CD14-positive monocyte (primary cell): ENCODE measurements at regions of chr2 and their contacts with region 1.

Region 1: DNA sequence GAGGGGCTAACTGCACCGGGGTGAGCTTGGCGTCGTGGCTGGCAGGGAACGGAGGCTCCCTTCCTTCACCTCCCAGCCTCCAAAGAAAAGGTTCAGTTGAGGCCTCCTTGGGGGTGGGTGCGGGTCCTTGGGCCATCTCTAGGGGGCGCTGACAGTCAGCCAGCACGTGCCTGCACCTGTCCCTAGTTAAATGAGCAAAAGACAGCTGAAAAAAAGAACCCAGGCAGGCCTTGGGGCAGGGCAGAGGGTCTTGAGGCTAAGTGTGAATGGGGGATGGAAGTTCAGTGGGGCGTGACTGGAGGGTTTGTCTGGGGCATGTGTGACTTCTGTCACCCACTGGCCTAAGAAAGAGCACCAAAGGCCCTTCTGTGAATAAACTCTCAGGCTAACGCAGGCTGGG is 56.4 kb downstream of the ZFP36L2 start:
- DNase-seq: peak in 1 of 3 donors; percentile 38
- H3K4me3 ChIP-seq: peak overlapping the region in 1 of 3 experiments; percentile 72
- H3K4me3 Mint-ChIP-seq: peak overlapping the region; percentile 80 to 95
- H3K27ac ChIP-seq: peak overlapping the region; percentile 91 to 92
- H3K27ac Mint-ChIP-seq: peak overlapping the region; percentile 98 to 100 (median 99)
- H3K4me1 ChIP-seq: peaks cover 84 to 92% of the 10 kb centered on the region in 2 donors
- H3K4me1 Mint-ChIP-seq: peaks cover 86% of the 10 kb centered on the region
- H3K27me3 ChIP-seq: no peaks in the 10 kb centered on the region
- H3K27me3 Mint-ChIP-seq: peaks cover 0 to 4% (median 2%) of the 10 kb centered on the region in 3 donors
- CTCF ChIP-seq: peak; percentile 76

Region 2: DNA sequence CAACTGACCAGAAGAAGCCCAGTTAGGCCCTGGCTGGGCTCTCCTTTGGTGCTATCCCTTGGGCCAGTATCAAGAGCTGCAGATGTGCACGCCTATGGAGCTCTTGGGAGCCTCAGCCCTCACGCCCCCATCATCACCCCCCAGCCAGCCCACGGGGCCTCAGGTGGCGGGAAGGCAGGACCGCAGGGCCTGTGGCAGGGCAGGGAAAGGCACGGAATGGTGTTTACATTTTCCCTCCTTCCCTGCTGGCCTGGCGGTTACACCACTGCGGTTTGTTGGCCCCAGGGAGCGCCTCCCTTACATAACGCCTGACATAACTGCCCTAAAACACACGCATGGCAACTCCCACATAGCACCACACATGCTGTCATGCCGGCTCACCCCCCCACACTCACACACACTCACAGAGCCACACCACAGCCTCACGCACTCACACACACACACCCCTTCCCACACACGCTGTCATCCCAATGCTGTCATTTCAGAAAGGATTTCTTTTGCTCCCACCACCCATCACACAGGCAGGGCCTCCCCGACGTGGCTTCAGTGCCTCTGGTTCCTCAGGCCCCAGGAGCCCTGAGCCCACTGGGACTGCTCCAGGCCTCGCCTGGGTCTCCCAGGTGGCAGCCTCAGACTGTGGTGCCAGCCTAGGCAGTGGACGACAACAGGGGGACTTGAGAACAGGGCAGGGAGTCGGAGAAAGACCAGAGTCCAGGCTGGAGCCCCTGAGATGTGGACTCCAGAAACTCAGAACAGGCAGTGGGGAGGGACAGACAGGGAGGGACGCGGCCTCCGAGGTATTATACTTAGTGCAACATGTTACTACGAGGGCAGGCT is 40.7 kb after region 1 on chr2:
- intact Hi-C with region 1: loop called (anchors 5 kb)
- DNase-seq: peak; percentile 78 to 90 (median 90)
- H3K4me3 ChIP-seq: peak overlapping the region in 1 of 3 experiments; percentile 32
- H3K4me3 Mint-ChIP-seq: peak overlapping the region; percentile 24 to 34
- H3K27ac ChIP-seq: peak overlapping the region; percentile 84 to 93
- H3K27ac Mint-ChIP-seq: peak overlapping the region; percentile 87 to 99 (median 94)
- H3K4me1 ChIP-seq: peaks cover 77 to 84% of the 10 kb centered on the region in 2 donors
- H3K4me1 Mint-ChIP-seq: peaks cover 75% of the 10 kb centered on the region
- H3K27me3 ChIP-seq: no peaks in the 10 kb centered on the region
- H3K27me3 Mint-ChIP-seq: peaks cover 0 to 2% (median 2%) of the 10 kb centered on the region in 3 donors
- CTCF ChIP-seq: no peak

Region 3: DNA sequence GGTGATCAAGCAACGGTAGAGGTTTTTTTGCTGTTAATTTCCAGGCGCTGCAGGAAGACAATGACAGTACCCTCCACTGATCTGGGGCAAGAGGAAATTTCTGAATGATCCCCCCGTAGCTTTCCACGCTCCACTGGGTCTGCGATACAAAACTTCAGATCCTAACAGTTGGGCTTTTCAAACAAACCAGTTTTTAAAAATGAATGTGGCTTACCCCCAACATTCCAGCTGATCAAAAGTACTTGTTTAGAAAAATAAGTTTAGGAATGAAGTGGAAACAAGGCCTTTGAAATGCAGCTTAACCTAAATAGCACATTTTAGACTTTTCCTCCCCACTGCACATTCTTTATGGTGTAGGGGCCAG is 50.8 kb after region 1 on chr2:
- intact Hi-C with region 1: no loop called
- DNase-seq: no peak
- H3K4me3 ChIP-seq: peak overlapping the region; percentile 83 to 99 (median 87)
- H3K4me3 Mint-ChIP-seq: peak overlapping the region; percentile 98 to 100
- H3K27ac ChIP-seq: peak overlapping the region; percentile 88 to 92
- H3K27ac Mint-ChIP-seq: peak overlapping the region; percentile 98 to 99 (median 98)
- H3K4me1 ChIP-seq: peaks cover 36 to 65% of the 10 kb centered on the region in 2 donors
- H3K4me1 Mint-ChIP-seq: peaks cover 56% of the 10 kb centered on the region
- H3K27me3 ChIP-seq: no peaks in the 10 kb centered on the region
- H3K27me3 Mint-ChIP-seq: peaks cover 0 to 4% (median 0%) of the 10 kb centered on the region in 3 donors
- CTCF ChIP-seq: no peak